ENCODE measurements at regions of chr5 and their contacts with region 1.

Region 1: GRCh38 chr5:97231025-97231636 is 48.1 kb upstream of the RIOK2 start:
- DNase-seq: peak; percentile 54
- ATAC-seq: peak; percentile 75
- H3K4me3 Mint-ChIP-seq: no peak overlapping the region
- H3K27ac Mint-ChIP-seq: no peak overlapping the region
- H3K4me1 Mint-ChIP-seq: no peaks in the 10 kb centered on the region
- H3K27me3 Mint-ChIP-seq: peaks cover 5% of the 10 kb centered on the region

Region 2: DNA sequence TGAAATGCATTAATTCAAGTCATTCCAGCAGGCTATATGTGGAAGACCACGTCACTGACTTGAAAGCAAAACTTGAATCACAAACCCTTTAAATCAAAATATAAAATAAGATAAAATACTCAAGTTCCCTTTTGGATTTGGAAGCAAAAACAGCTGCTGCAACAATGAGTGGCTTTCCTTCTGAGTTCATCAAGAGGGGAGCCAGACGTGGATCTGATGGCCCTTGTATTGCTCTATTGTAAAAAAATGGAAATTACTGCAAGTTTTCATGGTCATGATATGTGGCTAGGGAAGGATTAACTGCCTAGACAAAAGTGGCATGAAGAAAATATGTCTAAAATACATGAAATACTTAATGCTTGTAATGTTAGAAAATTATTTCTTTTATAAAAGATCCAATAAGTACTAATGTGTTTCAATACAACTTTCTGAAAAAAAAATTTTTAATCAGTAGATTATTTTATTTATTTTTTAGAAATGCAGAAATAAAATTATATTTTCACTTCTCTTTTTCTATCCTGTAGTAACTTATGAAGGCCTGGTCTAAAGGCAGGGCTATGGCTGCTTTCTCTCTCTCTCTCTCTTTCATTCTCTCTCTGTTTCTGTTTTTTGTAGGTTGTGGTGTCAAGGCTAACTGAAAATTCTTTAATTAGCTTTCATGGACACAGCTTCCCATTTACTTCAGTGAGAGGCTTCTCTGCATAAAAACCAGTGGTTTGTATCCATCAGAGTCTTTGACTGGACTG is 112.7 kb before region 1 on chr5:
- CTCF ChIA-PET with region 1: no interaction called
- POLR2A ChIA-PET with region 1: no interaction called
- DNase-seq: no peak
- ATAC-seq: no peak
- H3K4me3 Mint-ChIP-seq: no peak overlapping the region
- H3K27ac Mint-ChIP-seq: no peak overlapping the region
- H3K4me1 Mint-ChIP-seq: no peaks in the 10 kb centered on the region
- H3K27me3 Mint-ChIP-seq: peaks cover 14% of the 10 kb centered on the region

Region 3: GRCh38 chr5:97534166-97534565 is 303.0 kb after region 1 on chr5:
- CTCF ChIA-PET with region 1: interaction called, 19 read pairs
- POLR2A ChIA-PET with region 1: no interaction called
- DNase-seq: peak; percentile 25
- ATAC-seq: no peak
- H3K4me3 Mint-ChIP-seq: no peak overlapping the region
- H3K27ac Mint-ChIP-seq: no peak overlapping the region
- H3K4me1 Mint-ChIP-seq: peaks cover 2% of the 10 kb centered on the region
- H3K27me3 Mint-ChIP-seq: no peaks in the 10 kb centered on the region

Region 4: DNA sequence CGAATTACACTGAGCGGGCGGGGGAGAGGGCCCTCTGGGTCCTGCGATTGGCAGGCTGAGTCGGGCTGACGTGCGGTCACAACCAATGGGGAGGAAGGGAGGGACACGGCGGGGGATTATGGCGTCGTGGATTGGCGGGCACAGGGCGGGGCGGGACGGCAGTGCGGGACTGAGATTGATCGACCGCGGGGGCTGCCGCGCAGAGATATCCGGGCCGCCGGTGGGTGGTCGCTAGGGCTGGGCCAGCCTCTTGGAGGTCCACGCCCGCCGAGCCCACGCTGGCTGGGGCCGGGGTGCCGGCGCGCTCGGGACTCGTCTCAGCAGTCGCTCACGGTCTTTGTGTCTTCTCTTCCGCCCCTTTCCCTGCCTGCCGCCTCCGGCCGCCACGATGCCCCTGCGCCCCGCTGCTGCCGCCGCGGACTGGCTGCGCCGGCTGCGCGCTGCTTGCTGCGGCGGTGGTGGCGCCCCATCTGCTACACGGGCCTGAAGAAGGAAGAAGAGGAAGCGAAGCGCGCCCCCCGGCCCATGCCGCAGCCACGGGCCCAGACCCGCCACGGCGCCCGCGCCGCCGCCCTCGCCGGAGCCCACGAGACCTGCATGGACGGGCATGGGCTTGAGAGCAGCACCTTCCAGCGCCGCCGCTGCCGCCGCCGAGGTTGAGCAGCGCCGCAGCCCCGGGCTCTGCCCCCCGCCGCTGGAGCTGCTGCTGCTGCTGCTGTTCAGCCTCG is 1542.5 kb after region 1 on chr5 and contains the start of gene RGMB:
- CTCF ChIA-PET with region 1: interaction called, 10 read pairs
- POLR2A ChIA-PET with region 1: no interaction called
- DNase-seq: peak; percentile 87
- ATAC-seq: peak; percentile 90
- H3K4me3 Mint-ChIP-seq: peak within 1 kb of the TSS; percentile 88
- H3K27ac Mint-ChIP-seq: no peak within 1 kb of the TSS
- H3K4me1 Mint-ChIP-seq: peaks cover 44% of the 10 kb centered on the region
- H3K27me3 Mint-ChIP-seq: peaks cover 62% of the 10 kb centered on the region
- total RNA-seq, gene RGMB: 0.13 to 0.16 TPM

Measured in activated CD8-positive, alpha-beta T cell treated with anti-CD3 and anti-CD28 coated beads, Interleukin-2, amount 10 ng/mL, durations not matched to agents 7 days and 5 days (primary cell).